ENCODE measurements at regions of chr7 and their contacts with region 1.

Region 1: GRCh38 chr7:131654668-131655326 is 98.4 kb upstream of the PODXL start:
- DNase-seq: peak; percentile 61 to 78
- ATAC-seq: peak; percentile 75 to 92
- H3K4me3 ChIP-seq: no peak overlapping the region
- H3K27ac ChIP-seq: no peak overlapping the region
- H3K4me1 ChIP-seq: no peaks in the 10 kb centered on the region
- H3K27me3 ChIP-seq: no peaks in the 10 kb centered on the region
- CTCF ChIP-seq: peak; percentile 84 to 94 (median 92)
- POLR2A ChIP-seq: no peak

Region 2: GRCh38 chr7:130865408-130866236 is 789.2 kb before region 1 on chr7:
- in situ Hi-C with region 1: loop called in 1 of 4 experiments (anchors 25 kb)
- intact Hi-C with region 1: no loop called
- DNase-seq: no peak
- ATAC-seq: no peak
- H3K4me3 ChIP-seq: no peak overlapping the region
- H3K27ac ChIP-seq: no peak overlapping the region
- H3K4me1 ChIP-seq: no peaks in the 10 kb centered on the region
- H3K27me3 ChIP-seq: no peaks in the 10 kb centered on the region
- CTCF ChIP-seq: no peak
- POLR2A ChIP-seq: no peak

Region 3: GRCh38 chr7:131507592-131508331 is 147.0 kb before region 1 on chr7:
- in situ Hi-C with region 1: loop called (anchors 5 to 10 kb)
- intact Hi-C with region 1: loop called (anchors 1 kb)
- DNase-seq: peak; percentile 65 to 78
- ATAC-seq: peak; percentile 58 to 60
- H3K4me3 ChIP-seq: no peak overlapping the region
- H3K27ac ChIP-seq: peak overlapping the region in 3 of 4 donors; percentile 27 to 29 (median 27)
- H3K4me1 ChIP-seq: peaks cover 7 to 31% of the 10 kb centered on the region in 2 donors
- H3K27me3 ChIP-seq: no peaks in the 10 kb centered on the region
- CTCF ChIP-seq: peak; percentile 81 to 97 (median 92)
- POLR2A ChIP-seq: no peak

Region 4: DNA sequence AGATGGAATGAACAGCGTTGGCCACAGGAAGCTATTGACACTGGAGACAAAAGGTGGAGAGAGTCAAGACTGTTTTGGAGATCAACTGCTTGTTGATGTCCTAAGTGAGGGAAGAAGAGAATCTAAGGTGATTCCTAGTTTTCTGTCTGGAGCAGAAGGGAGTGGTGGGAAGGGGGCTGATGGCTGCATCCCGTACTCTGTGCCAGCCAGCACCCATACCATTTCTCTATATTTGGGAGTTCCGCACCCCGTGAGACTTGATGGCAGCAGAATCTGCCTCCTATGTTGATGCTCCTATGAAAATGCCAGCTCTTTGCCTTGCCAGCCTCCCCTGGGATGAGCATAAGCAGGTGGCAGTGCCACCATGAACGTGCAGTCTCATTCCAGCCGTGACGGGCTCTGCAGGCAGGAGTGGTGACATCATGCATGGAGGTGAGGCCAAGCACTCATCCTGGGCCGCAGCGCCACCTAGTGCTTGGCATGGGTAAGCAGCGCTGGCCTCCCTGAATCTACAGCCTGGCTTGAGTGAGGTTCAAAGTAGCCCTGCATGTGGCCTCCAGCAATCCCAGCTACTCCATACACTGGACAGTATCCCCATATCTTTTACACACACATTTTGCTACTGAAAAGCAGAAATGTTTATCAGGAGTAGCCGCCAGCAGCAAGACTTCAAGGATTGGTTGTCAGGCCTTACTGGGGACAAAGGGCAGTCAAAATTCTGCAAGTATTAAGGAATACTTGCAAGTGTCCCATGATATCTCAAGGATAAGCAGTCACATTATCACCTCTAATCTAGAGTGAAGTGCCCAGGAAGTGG is 141.3 kb before region 1 on chr7:
- in situ Hi-C with region 1: loop called (anchors 5 to 10 kb)
- intact Hi-C with region 1: loop called (anchors 1 kb)
- DNase-seq: peak; percentile 73 to 89
- ATAC-seq: peak; percentile 74 to 91
- H3K4me3 ChIP-seq: no peak overlapping the region
- H3K27ac ChIP-seq: peak overlapping the region; percentile 57 to 74 (median 66)
- H3K4me1 ChIP-seq: peaks cover 14 to 27% of the 10 kb centered on the region in 2 donors
- H3K27me3 ChIP-seq: no peaks in the 10 kb centered on the region
- CTCF ChIP-seq: peak; percentile 83 to 93 (median 93)
- POLR2A ChIP-seq: no peak

Region 5: GRCh38 chr7:131546583-131547111 is 108.2 kb before region 1 on chr7:
- in situ Hi-C with region 1: loop called in 1 of 4 experiments (anchors 10 kb)
- intact Hi-C with region 1: no loop called
- DNase-seq: no peak
- ATAC-seq: no peak
- H3K4me3 ChIP-seq: no peak overlapping the region
- H3K27ac ChIP-seq: peak overlapping the region in 3 of 4 donors; percentile 76 to 78 (median 77)
- H3K4me1 ChIP-seq: peaks cover 0 to 10% of the 10 kb centered on the region in 2 donors
- H3K27me3 ChIP-seq: no peaks in the 10 kb centered on the region
- CTCF ChIP-seq: peak; percentile 34 to 61 (median 47)
- POLR2A ChIP-seq: no peak

Region 6: DNA sequence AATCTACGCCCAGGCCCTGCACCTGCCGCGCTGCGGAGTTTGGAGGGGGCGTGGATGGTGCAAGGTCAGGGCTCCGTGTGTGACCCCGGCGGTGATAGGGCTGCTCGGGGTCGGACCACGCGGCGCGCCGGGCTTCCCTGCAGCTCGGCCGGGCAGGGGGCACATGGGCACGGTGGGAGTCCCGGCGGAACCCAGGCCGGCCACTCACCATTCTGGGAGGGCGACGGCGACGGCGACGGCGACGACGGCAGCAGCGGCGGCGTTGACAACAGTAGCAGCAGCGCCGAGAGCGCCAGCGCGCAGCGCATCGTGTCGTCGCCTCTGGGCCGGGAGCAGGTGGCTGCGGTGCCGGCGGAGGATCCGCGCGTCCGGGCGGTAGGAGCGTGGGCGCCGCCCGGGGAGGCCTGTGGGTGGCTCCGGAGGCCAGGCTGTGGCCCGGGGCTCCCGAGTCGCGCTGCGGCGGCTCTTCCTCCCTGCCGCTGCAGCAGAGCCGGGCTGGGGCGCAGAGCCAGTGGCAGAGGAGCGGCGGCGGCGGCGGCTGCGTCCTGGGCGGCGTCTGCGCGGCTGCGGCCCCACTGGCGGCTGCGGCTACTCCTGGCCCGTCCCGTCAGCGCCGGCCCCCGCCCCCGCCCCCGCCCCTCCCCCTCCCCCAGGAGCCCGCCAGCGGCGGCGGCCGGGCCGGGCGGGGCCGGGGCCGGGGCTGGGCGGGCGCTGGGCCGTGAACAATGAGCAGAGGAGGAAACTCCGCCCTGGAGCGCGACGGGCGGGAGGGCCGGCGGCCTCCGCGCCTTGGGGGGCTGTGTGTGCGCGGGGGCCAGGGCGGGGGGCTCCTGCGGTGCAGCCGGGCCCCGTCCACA is 98.5 kb before region 1 on chr7 and contains the start of gene PODXL:
- in situ Hi-C with region 1: no loop called
- intact Hi-C with region 1: loop called (anchors 1 kb)
- DNase-seq: peak; percentile 41 to 45
- ATAC-seq: peak; percentile 75 to 84
- H3K4me3 ChIP-seq: peak within 1 kb of the TSS; percentile 59 to 86 (median 68)
- H3K27ac ChIP-seq: peak within 1 kb of the TSS; percentile 65 to 79 (median 74)
- H3K4me1 ChIP-seq: peaks cover 11 to 25% of the 10 kb centered on the region in 2 donors
- H3K27me3 ChIP-seq: no peaks in the 10 kb centered on the region
- CTCF ChIP-seq: peak in 2 of 5 experiments; percentile 12 to 32
- POLR2A ChIP-seq: peak; percentile 48 to 66
- total RNA-seq, gene PODXL: 7.9 to 21.3 (median 13.2) TPM

Region 7: GRCh38 chr7:131931370-131931769 is 276.6 kb after region 1 on chr7:
- in situ Hi-C with region 1: no loop called
- intact Hi-C with region 1: no loop called
- DNase-seq: no peak
- ATAC-seq: no peak
- H3K4me3 ChIP-seq: no peak overlapping the region
- H3K27ac ChIP-seq: no peak overlapping the region
- H3K4me1 ChIP-seq: no peaks in the 10 kb centered on the region
- H3K27me3 ChIP-seq: no peaks in the 10 kb centered on the region
- CTCF ChIP-seq: no peak
- POLR2A ChIP-seq: no peak